Left ventricle myocardium inferior (tissue), 1 donor: ENCODE measurements at regions of chr17 and their contacts with region 1.

Region 1: DNA sequence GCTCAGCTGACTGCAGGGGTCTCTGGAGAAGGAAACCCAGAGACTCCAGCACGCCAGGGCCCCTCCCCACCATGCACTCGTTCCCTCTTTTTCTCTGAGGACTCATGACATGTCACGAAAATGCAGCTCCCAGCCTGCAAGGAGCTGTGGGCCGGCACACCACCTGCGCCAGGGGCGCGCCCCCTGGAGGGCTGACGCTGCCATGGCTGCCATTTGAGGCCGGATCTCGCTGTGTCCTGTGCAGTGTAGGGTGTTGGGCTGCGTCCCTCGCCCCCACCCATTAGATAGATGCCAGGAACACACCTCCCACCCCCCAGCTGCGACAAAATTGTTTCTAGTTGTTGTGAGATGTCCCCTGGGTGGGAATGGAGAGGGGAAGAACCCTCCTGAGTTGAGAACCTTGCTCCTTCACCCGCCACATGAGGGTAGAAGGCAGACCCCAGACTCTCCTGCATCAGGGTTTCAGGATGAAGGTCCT is 8.2 kb downstream of the SYNGR2 start:
- DNase-seq: peak; percentile 73
- H3K4me3 ChIP-seq: no peak overlapping the region
- H3K27ac ChIP-seq: peak overlapping the region; percentile 91
- H3K4me1 ChIP-seq: peaks cover 62% of the 10 kb centered on the region
- H3K27me3 ChIP-seq: no peaks in the 10 kb centered on the region
- CTCF ChIP-seq: peak; percentile 97

Region 2: GRCh38 chr17:77476931-77477877 is 699.4 kb before region 1 on chr17:
- intact Hi-C with region 1: no loop called
- DNase-seq: peak; percentile 69
- H3K4me3 ChIP-seq: peak overlapping the region; percentile 32
- H3K27ac ChIP-seq: peak overlapping the region; percentile 84
- H3K4me1 ChIP-seq: peaks cover 93% of the 10 kb centered on the region
- H3K27me3 ChIP-seq: no peaks in the 10 kb centered on the region
- CTCF ChIP-seq: peak; percentile 22

Region 3: GRCh38 chr17:78082988-78083387 is 93.6 kb before region 1 on chr17:
- intact Hi-C with region 1: no loop called
- DNase-seq: no peak
- H3K4me3 ChIP-seq: no peak overlapping the region
- H3K27ac ChIP-seq: peak overlapping the region; percentile 81
- H3K4me1 ChIP-seq: peaks cover 51% of the 10 kb centered on the region
- H3K27me3 ChIP-seq: no peaks in the 10 kb centered on the region
- CTCF ChIP-seq: no peak

Region 4: DNA sequence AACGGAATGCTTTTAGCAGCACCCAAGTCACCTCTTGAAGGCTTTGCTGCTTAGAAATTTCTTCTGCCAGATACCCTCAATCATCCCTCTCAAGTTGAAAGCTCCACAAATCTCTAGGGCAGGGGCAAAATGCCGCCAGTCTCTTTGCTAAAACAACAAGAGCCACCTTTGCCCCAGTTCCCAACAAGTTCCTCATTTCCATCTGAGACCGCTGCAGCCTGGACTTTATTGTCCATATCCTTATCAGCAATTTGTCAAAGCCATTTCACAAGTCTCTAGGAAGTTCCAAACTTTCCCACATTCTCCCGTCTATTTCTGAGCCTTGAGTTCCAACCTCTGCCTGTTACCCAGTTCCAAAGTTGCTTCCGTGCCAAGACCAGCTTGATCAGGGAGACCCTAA is 75.5 kb before region 1 on chr17:
- intact Hi-C with region 1: no loop called
- DNase-seq: no peak
- H3K4me3 ChIP-seq: no peak overlapping the region
- H3K27ac ChIP-seq: no peak overlapping the region
- H3K4me1 ChIP-seq: no peaks in the 10 kb centered on the region
- H3K27me3 ChIP-seq: no peaks in the 10 kb centered on the region
- CTCF ChIP-seq: no peak

Region 5: DNA sequence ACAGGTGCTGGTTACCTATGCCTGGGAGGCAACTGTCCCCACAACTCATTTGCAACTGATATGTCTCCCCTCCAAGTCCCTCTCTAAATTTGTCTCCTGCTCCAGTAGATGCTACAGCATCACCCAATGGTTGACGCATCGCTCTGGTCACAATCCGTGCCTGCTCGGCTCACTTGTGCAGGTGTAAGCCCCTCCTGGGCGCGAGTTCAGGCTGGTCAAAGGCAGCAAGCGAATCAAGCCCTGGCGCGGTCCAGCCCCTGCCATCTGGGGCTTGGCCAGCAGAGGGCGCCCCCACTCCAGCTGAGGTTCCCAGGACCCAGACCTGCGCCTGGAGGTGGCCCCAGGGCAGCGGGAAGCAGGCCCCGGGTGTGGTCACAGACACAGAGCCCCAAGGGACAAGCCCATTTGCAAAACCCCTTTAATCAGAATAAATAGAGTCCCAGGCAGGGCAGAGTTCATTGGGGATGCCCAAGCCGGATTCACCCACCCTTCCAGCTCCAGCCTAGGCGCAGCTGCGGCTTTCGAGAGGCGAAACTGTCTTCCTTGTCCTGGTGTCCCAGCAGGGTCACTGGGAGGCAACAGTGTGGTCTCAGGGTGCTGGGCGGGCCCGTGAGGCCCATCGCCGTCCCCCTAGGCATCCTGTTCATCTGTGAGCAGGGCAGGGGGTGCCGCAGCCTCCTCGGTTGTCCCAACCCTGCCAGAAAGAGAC is 63.9 kb before region 1 on chr17:
- intact Hi-C with region 1: loop called (anchors 5 kb)
- DNase-seq: peak; percentile 83
- H3K4me3 ChIP-seq: no peak overlapping the region
- H3K27ac ChIP-seq: peak overlapping the region; percentile 52
- H3K4me1 ChIP-seq: peaks cover 71% of the 10 kb centered on the region
- H3K27me3 ChIP-seq: no peaks in the 10 kb centered on the region
- CTCF ChIP-seq: peak; percentile 99

Region 6: GRCh38 chr17:78263063-78263743 is 86.6 kb after region 1 on chr17:
- intact Hi-C with region 1: no loop called
- DNase-seq: peak; percentile 57
- H3K4me3 ChIP-seq: no peak overlapping the region
- H3K27ac ChIP-seq: peak overlapping the region; percentile 76
- H3K4me1 ChIP-seq: peaks cover 46% of the 10 kb centered on the region
- H3K27me3 ChIP-seq: no peaks in the 10 kb centered on the region
- CTCF ChIP-seq: no peak